GM23248 (cell line): ENCODE measurements at regions of chr17 and their contacts with region 1.

Region 1: GRCh38 chr17:33049781-33050414 is 58.3 kb downstream of the SPACA3 start:
- DNase-seq: peak; percentile 62
- H3K4me3 ChIP-seq: no peak overlapping the region
- H3K27ac ChIP-seq: no peak overlapping the region
- H3K4me1 ChIP-seq: no peaks in the 10 kb centered on the region
- H3K27me3 ChIP-seq: peaks cover 6% of the 10 kb centered on the region; the same call in 1 of the 2 replicates

Region 2: GRCh38 chr17:33192951-33193911 is 143.3 kb after region 1 on chr17:
- in situ Hi-C with region 1: no loop called
- DNase-seq: no peak
- H3K4me3 ChIP-seq: no peak overlapping the region
- H3K27ac ChIP-seq: no peak overlapping the region
- H3K4me1 ChIP-seq: no peaks in the 10 kb centered on the region
- H3K27me3 ChIP-seq: peaks cover 28% of the 10 kb centered on the region

Region 3: GRCh38 chr17:33234930-33235685 is 185.2 kb after region 1 on chr17:
- in situ Hi-C with region 1: no loop called
- DNase-seq: peak; percentile 96
- H3K4me3 ChIP-seq: no peak overlapping the region
- H3K27ac ChIP-seq: no peak overlapping the region
- H3K4me1 ChIP-seq: peaks cover 10% of the 10 kb centered on the region; the same call in 1 of the 2 replicates
- H3K27me3 ChIP-seq: no peaks in the 10 kb centered on the region

Region 4: GRCh38 chr17:33674685-33675084 is 624.8 kb after region 1 on chr17:
- in situ Hi-C with region 1: loop called (anchors 25 kb)
- DNase-seq: peak; percentile 79
- H3K4me3 ChIP-seq: no peak overlapping the region
- H3K27ac ChIP-seq: no peak overlapping the region
- H3K4me1 ChIP-seq: no peaks in the 10 kb centered on the region
- H3K27me3 ChIP-seq: no peaks in the 10 kb centered on the region